Activated CD4-positive, alpha-beta T cell treated with anti-CD3 and anti-CD28 coated beads, Interleukin-2, amount 10 ng/mL, durations not matched to agents 7 days and 5 days (primary cell): ENCODE measurements at regions of chr17 and their contacts with region 1.

Region 1: GRCh38 chr17:1590031-1590748 is 27.6 kb upstream of the PITPNA start:
- DNase-seq: no peak
- H3K4me3 Mint-ChIP-seq: no peak overlapping the region
- H3K27ac Mint-ChIP-seq: no peak overlapping the region
- H3K4me1 Mint-ChIP-seq: peaks cover 6% of the 10 kb centered on the region
- H3K27me3 Mint-ChIP-seq: no peaks in the 10 kb centered on the region

Region 2: DNA sequence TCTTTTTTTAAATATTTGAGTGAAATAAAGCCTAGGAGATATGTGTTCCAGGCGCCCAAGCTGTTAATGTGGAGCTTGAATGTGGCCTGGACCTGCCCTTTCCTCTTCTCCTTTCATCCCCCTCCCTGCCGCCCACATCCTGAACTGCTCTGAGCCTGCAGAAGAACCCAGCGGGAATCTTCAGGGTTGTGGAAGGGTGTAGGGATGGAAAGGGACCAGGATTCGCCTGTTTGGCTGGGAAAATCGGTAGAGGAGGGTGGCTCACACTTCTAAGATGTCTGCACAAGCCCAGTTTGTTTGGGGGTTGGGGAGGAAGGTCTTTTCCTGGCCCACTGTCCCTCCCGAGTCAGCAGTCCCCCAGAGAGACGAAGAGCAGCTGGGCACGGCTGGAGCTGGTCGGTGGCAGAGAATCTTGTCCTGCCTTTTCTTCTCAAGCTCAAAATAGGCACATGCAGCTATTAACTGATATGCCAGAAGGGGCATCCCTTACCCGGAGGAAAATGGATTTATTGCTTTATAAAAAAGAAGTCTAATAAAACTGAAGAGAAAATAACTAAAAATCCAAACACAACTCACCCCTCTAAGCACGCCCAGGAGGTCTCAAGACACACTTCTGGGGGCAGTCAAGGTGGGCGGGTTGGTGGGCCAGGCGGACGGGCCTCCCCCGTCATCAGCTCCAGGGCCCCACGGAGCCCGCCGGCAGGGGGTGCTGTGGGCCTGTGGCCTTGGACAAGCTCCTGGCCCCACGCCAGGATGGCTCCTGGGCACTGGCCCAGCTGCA is 16.1 kb before region 1 on chr17:
- CTCF ChIA-PET with region 1: interaction called, 11 read pairs
- POLR2A ChIA-PET with region 1: no interaction called
- DNase-seq: peak; percentile 55
- H3K4me3 Mint-ChIP-seq: no peak overlapping the region
- H3K27ac Mint-ChIP-seq: peak overlapping the region; percentile 60
- H3K4me1 Mint-ChIP-seq: peaks cover 9% of the 10 kb centered on the region
- H3K27me3 Mint-ChIP-seq: no peaks in the 10 kb centered on the region